ENCODE measurements at regions of chr10 and their contacts with region 1.

Region 1: GRCh38 chr10:28381903-28382347 is 79.1 kb upstream of the MPP7 start:
- DNase-seq: peak in 4 of 5 donors; percentile 64 to 78 (median 72)
- ATAC-seq: peak; percentile 80 to 91 (median 84)
- H3K4me3 ChIP-seq: no peak overlapping the region
- H3K27ac ChIP-seq: no peak overlapping the region
- H3K4me1 ChIP-seq: peaks cover 0 to 7% (median 0%) of the 10 kb centered on the region in 12 donors
- H3K27me3 ChIP-seq: peaks cover 0 to 4% (median 0%) of the 10 kb centered on the region in 9 donors
- CTCF ChIP-seq: peak; percentile 86 to 97 (median 92)
- POLR2A ChIP-seq: no peak

Region 2: GRCh38 chr10:27446091-27446918 is 935.6 kb before region 1 on chr10:
- intact Hi-C with region 1: loop called in 4 of 10 experiments (anchors 5 to 10 kb)
- DNase-seq: no peak
- ATAC-seq: peak in 1 of 4 donors; percentile 33
- H3K4me3 ChIP-seq: no peak overlapping the region
- H3K27ac ChIP-seq: no peak overlapping the region
- H3K4me1 ChIP-seq: peaks cover 0 to 23% (median 0%) of the 10 kb centered on the region in 12 donors
- H3K27me3 ChIP-seq: no peaks in the 10 kb centered on the region
- CTCF ChIP-seq: peak; percentile 23 to 57 (median 43)
- POLR2A ChIP-seq: no peak

Region 3: GRCh38 chr10:27558612-27559020 is 823.3 kb before region 1 on chr10:
- intact Hi-C with region 1: loop called in 1 of 10 experiments (anchors 10 kb)
- DNase-seq: peak in 4 of 5 donors; percentile 37 to 57 (median 42)
- ATAC-seq: peak; percentile 71 to 89 (median 86)
- H3K4me3 ChIP-seq: no peak overlapping the region
- H3K27ac ChIP-seq: no peak overlapping the region
- H3K4me1 ChIP-seq: peaks cover 0 to 4% (median 0%) of the 10 kb centered on the region in 12 donors
- H3K27me3 ChIP-seq: no peaks in the 10 kb centered on the region
- CTCF ChIP-seq: peak; percentile 51 to 81 (median 66)
- POLR2A ChIP-seq: no peak

Region 4: DNA sequence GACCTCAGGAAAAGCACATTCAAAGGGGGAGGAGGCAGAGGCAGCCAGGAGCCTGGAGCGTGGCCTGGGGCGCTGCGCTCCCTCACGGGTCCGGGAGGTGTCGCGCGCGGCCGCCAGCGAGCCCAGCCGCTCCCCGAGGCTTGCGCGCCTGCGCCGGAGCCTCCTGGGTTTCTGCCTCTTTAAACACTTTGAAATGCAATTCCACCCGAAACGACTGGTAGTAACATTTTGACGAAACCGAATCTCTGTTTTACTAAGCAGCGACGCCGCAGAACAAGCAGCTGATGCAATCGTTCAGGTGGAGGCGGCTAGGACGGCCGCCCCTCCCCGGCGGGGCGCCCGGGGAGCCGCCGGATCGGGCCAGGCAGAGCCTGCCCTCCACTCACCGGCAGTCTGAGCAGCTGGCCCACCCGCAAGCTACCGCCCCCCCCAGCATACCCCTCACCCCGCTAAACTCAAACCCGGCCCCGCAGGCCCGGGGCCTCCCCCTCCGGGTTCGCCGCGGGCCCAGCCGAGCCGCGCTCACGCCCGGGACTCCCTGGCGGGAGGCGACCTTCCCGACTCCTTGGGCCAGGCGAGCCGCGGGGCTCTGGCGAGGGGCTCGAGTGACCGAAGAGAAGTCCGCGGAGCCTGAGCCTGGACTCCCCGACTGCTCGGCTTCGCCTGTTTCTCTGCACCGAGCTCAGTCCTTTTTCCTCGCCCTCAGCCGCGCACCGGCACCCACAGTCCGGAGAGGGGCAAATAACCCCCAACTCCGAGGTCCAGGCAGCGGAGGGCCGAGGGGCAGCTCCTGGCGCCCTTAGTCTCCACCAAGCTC is 639.5 kb before region 1 on chr10:
- intact Hi-C with region 1: loop called in 1 of 10 experiments (anchors 5 kb)
- DNase-seq: peak; percentile 59 to 86 (median 71)
- ATAC-seq: peak; percentile 66 to 96 (median 90)
- H3K4me3 ChIP-seq: peak overlapping the region; percentile 46 to 77 (median 66)
- H3K27ac ChIP-seq: peak overlapping the region in 8 of 12 donors; percentile 27 to 95 (median 47)
- H3K4me1 ChIP-seq: peaks cover 0 to 59% (median 38%) of the 10 kb centered on the region in 12 donors
- H3K27me3 ChIP-seq: peaks cover 28 to 84% (median 59%) of the 10 kb centered on the region in 9 donors
- CTCF ChIP-seq: peak; percentile 52 to 90 (median 75)
- POLR2A ChIP-seq: no peak

Region 5: DNA sequence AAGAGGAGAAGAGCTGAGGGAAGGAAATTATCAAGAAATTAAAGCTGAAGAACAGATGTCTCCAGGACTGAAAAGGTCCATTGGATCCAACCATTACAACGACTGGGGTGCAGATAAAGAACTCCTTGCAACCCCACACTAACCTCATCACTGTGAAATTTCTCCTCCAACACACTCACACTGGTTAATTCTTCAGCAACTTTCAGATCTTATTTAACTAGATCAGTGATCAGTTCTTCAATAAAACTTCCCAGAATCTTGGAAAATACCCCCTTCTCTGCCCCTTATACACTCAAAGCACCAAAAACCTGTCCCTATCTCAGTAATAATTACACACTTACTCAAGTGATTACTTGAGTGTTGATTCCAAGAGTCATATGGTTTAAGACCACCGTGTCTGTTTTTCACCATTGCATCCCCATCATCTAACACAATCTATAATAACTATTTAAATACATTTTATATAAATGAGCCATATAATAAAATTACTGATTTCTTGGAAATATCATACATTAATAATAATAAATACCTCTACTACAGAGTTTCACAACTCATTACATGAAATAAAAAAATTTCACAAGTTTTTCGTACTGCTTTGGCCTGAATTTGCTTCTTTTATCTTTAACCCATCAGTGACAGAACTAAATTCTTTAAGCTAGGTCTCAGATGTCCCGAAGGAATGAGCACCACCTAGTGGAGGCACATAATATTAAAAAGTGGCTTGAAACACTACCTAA is 202.8 kb before region 1 on chr10:
- intact Hi-C with region 1: loop called in 1 of 10 experiments (anchors 10 kb)
- DNase-seq: peak in 1 of 5 donors; percentile 9
- ATAC-seq: peak in 3 of 4 donors; percentile 46 to 65 (median 57)
- H3K4me3 ChIP-seq: peak overlapping the region in 3 of 12 donors; percentile 25 to 45 (median 28)
- H3K27ac ChIP-seq: peak overlapping the region in 1 of 12 donors; percentile 66
- H3K4me1 ChIP-seq: peaks cover 0 to 16% (median 7%) of the 10 kb centered on the region in 12 donors
- H3K27me3 ChIP-seq: no peaks in the 10 kb centered on the region
- CTCF ChIP-seq: peak; percentile 60 to 82 (median 71)
- POLR2A ChIP-seq: no peak

Region 6: DNA sequence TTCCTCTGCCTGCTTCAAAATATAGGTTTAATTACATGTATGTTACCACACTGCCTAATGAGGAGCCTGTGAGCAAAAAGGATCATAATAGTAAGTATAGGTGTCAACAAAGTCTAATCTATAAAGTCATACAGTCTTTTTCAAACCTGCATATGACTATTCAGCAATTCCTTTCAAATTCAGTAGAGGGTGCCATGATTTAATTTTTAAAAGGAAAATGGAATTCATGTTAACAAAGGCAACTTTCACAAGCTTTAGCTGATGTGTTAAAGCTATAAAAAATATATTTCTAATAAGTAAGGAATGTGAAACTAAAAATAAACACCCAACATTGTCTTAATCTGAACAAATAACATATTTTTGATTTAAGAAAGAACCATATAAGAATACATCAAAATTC is 131.1 kb before region 1 on chr10:
- intact Hi-C with region 1: loop called (anchors 1 to 5 kb)
- DNase-seq: no peak
- ATAC-seq: peak in 2 of 4 donors; percentile 40 to 42
- H3K4me3 ChIP-seq: no peak overlapping the region
- H3K27ac ChIP-seq: no peak overlapping the region
- H3K4me1 ChIP-seq: peaks cover 0 to 25% (median 1%) of the 10 kb centered on the region in 12 donors
- H3K27me3 ChIP-seq: peaks cover 0 to 4% (median 0%) of the 10 kb centered on the region in 9 donors
- CTCF ChIP-seq: peak; percentile 32 to 69 (median 59)
- POLR2A ChIP-seq: no peak

Region 7: DNA sequence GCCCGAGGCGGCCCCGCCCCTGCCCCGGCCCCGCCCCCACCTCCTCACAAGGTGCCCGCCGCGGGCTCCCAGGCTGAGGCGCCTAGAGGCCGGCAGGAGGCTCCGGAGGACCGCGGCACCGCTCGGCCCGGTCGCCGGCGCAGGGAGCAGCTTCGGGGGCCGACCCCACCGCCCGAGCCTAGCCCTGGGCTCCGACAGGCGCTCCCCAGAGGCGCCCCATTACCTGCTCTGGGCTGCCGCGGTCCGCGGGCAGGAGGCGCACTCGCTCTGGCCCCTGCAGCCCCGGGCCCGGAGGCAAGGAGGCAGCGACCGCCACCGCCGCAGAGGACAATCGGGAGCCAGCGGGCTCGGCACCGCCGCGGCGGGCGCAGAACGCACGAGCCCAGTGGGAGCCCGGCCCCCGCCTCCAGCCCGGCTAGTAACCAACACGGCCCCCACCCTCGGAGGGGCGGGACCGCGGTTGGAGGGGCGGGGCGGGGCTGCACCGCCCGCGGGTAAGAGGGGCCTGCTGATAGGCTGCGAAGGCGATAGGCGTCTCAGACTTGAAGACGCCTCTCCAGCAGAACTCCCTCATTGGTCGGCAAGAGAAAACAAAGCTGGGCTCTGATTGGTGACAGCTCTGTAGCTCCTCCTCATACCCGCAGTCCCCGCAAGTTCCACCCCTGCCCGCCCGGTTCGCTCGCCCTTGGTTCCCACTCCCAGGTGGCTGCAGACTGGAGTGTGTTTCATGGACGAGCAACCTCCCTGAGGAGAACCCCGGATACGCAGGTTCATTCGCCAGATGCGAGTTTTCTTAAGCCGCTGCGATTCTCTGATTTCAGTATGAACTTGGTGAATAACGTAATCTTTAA is 79.1 kb before region 1 on chr10 and contains the start of gene MPP7:
- intact Hi-C with region 1: loop called in 8 of 10 experiments (anchors 2 to 10 kb)
- DNase-seq: peak; percentile 95 to 97 (median 96)
- ATAC-seq: peak; percentile 99
- H3K4me3 ChIP-seq: peak within 1 kb of the TSS; percentile 70 to 98 (median 88)
- H3K27ac ChIP-seq: peak within 1 kb of the TSS; percentile 48 to 93 (median 86)
- H3K4me1 ChIP-seq: peaks cover 0 to 23% (median 8%) of the 10 kb centered on the region in 12 donors
- H3K27me3 ChIP-seq: no peaks in the 10 kb centered on the region
- CTCF ChIP-seq: peak in 10 of 12 donors; percentile 11 to 52 (median 40)
- POLR2A ChIP-seq: peak in 1 of 2 donors; percentile 44
- total RNA-seq, gene MPP7: 8.9 to 18.6 (median 15.5) TPM

Region 8: GRCh38 chr10:28418069-28418468 is 36.1 kb after region 1 on chr10:
- intact Hi-C with region 1: no loop called
- DNase-seq: no peak
- ATAC-seq: no peak
- H3K4me3 ChIP-seq: no peak overlapping the region
- H3K27ac ChIP-seq: no peak overlapping the region
- H3K4me1 ChIP-seq: no peaks in the 10 kb centered on the region
- H3K27me3 ChIP-seq: peaks cover 0 to 4% (median 0%) of the 10 kb centered on the region in 9 donors
- CTCF ChIP-seq: no peak
- POLR2A ChIP-seq: no peak

Measured in heart left ventricle (tissue), 16 donors.